ENCODE measurements at regions of chr3 and their contacts with region 1.

Region 1: DNA sequence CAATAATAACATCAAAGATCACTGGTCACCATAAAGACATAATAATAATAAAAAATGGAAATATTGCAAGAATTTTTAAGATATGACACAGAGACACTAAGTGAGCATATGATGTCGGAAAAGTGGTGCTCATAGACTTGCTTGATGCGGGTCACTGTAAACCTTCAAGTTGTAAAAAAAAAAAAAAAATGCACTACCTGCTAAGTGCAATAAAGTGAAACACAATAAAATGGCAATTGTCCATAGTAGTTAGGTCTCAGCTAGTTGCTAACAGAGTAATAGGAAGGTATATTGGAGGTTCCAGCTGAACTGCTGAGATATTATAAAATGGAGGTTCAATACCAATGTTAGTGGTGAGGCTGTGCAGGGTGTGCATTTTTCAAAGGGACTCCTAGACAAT is 146.6 kb upstream of the MRPS22 start:
- DNase-seq: no peak

Region 2: GRCh38 chr3:139231555-139232281 is 34.5 kb after region 1 on chr3:
- intact Hi-C with region 1: loop called in 1 of 2 experiments (anchors 1 kb)
- DNase-seq: no peak

Region 3: DNA sequence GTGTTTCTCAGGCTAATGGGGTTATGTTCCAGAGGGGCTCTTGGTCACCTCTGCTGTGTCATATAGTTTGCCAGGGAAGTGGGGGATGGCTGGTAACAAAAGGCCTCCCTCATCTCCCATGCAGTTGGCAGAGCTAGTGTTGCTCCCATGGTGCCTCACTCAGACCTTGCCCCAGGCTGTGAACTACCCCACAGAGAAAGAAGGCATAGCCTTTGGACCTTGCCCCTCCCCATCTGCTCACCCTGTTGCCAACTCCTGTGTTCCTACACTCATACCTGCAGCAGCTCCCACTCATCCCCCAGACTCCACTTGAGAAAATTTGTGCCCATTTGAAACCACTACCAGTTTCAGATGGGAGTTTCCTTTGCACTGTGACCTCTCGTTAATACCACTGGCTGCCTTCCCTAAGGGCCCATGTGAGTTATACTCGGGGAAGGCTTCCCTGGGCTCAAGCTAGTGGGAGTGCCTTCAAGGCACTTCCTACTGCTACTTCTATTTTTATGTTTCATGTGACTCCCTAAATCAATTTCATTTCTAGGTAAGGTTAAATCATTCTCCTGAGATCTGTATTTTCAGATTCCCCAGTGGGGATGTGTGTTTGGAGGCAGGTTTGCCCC is 217.5 kb after region 1 on chr3:
- intact Hi-C with region 1: no loop called
- DNase-seq: no peak

Measured in posterior vena cava (tissue), 2 donors.